ENCODE measurements at regions of chr9 and their contacts with region 1.

Region 1: GRCh38 chr9:12318732-12319685 is 374.2 kb upstream of the TYRP1 start:
- DNase-seq: no peak
- H3K4me3 ChIP-seq: no peak overlapping the region
- H3K27ac ChIP-seq: no peak overlapping the region
- H3K4me1 ChIP-seq: no peaks in the 10 kb centered on the region
- H3K27me3 ChIP-seq: no peaks in the 10 kb centered on the region
- CTCF ChIP-seq: no peak

Region 2: DNA sequence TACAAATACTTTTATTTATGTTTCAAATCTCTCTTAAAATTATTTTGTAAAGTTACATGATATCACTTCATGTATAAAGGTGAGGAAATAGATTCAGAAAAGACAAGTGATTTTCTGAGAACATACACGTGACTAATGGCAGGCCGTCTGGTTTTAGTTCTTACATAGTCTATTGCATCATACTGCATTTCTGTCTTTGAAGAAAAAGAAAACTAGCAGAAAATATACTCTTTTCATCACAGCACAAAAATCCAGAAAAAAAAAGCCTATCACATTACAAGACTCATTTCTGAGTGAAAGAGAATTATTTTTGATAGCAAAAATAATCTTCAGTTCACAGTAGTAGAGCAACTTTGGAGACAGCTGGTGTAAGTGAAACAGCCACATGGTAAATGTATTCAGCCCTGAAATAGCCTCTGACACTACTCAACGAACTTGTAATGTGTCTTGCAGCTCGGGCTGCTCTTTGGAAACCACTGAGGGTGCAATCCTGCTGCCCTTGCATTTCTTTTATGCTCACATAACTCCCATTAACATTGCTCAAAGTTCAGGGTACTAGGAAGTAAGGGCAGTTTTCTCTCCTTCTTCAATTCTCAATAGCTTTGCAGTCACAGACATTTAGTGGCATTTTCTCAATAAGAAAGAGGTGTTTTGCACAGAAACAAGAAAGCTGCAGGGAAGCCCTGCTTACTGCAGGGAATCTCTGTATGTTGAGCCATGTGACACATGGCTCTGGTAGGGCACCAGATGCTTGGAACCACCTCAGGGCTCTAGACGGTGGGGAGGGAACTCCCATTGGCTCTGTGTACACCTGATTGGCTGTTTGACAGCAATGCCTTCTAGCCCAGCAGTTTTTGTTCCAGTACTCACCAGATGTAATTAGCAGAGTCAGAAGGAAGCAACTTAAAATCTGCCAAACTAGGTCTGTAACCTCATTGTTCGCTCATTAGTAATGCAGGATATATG is 860.9 kb before region 1 on chr9:
- intact Hi-C with region 1: no loop called
- DNase-seq: no peak
- H3K4me3 ChIP-seq: no peak overlapping the region
- H3K27ac ChIP-seq: no peak overlapping the region
- H3K4me1 ChIP-seq: no peaks in the 10 kb centered on the region
- H3K27me3 ChIP-seq: no peaks in the 10 kb centered on the region
- CTCF ChIP-seq: no peak

Region 3: DNA sequence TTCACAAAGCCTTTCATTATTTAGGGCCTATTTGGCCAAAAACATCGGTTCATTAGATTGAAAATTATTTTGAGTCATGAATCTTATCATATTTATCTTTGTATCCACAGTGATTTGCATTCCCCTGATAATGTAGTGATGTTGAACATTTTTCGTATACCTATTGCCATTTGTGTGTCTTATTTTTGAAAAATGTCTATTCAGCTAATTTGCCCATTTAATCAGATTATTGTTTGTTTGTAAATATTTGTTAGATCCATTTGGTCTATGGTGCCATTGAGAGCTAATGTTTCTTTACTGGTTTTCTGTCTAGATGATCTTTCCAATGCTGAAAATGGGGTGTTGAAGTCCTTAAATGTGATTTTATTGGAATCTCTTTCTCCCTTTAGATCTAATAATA is 65.1 kb before region 1 on chr9:
- intact Hi-C with region 1: no loop called
- DNase-seq: no peak
- H3K4me3 ChIP-seq: no peak overlapping the region
- H3K27ac ChIP-seq: no peak overlapping the region
- H3K4me1 ChIP-seq: no peaks in the 10 kb centered on the region
- H3K27me3 ChIP-seq: no peaks in the 10 kb centered on the region
- CTCF ChIP-seq: no peak

Region 4: DNA sequence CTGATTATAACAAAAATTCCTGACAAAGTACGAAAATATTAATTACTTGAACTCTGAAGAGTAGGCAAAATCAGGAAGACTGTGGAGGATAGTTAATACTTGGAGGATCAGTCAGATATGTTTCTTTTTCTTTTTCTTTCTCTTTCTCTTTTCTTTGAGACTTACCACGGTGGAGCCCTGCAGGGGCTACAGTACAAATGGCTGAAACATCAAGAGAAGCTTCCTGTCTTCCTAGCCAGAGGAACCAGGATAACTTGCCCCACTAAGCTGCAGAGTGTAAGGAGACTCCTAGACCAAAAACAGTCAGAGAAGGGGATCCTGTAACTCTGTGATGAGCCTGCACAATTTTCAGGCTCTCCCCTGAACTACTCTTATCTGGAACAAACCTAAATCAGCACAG is 49.6 kb after region 1 on chr9:
- intact Hi-C with region 1: loop called (anchors 10 kb)
- DNase-seq: no peak
- H3K4me3 ChIP-seq: no peak overlapping the region
- H3K27ac ChIP-seq: no peak overlapping the region
- H3K4me1 ChIP-seq: no peaks in the 10 kb centered on the region
- H3K27me3 ChIP-seq: no peaks in the 10 kb centered on the region
- CTCF ChIP-seq: no peak

Region 5: DNA sequence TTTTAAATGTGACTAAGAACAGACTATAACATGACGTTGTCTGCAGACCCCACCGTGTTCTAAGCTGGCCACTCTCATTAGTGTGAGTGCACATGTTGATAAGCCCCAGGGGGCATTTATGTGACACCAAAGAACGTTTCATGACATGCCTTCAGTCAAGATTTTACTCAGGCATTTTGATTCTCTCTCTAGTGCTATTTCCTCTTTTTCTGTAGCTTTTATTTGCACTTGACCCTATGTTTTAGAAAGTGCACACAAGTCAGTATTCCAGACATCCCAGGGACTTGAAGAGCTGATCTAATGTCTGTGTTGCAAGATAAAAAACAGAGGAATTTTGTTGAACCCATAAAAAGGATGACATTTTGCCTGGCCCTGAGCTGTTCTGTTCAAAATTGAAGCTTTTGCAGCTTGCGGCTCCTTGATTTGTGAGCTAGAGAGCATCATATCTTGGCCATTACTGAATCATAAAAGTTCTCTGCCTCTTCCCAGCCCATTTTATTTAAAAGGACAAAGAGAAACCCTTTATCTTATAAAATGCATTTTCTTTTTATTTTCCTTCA is 293.3 kb after region 1 on chr9:
- intact Hi-C with region 1: no loop called
- DNase-seq: no peak
- H3K4me3 ChIP-seq: no peak overlapping the region
- H3K27ac ChIP-seq: no peak overlapping the region
- H3K4me1 ChIP-seq: no peaks in the 10 kb centered on the region
- H3K27me3 ChIP-seq: peaks cover 26% of the 10 kb centered on the region
- CTCF ChIP-seq: no peak

Measured in left ventricle myocardium inferior (tissue), 1 donor.